ENCODE measurements at regions of chr2 and their contacts with region 1.

Region 1: DNA sequence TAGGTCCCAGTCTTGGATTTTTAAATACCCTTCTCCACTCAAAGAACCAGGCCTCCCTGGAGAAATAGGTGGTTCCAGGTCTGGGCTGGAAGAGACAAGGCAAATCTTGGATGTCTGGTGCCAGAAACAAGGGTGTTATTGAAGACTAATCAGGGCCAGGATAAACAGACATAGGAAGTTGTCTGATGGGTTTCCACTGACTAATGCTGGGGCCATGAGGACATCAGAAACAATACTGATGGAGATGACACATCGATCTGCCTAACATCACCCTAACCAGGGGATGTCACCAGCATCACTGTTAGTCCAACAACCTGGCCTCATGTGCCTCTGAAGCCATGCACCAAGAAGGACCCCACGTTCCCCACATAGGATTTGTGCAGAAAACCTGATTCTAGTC is 42.5 kb upstream of the GLI2 start:
- DNase-seq: no peak
- H3K4me3 ChIP-seq: no peak overlapping the region
- CTCF ChIP-seq: no peak

Region 2: DNA sequence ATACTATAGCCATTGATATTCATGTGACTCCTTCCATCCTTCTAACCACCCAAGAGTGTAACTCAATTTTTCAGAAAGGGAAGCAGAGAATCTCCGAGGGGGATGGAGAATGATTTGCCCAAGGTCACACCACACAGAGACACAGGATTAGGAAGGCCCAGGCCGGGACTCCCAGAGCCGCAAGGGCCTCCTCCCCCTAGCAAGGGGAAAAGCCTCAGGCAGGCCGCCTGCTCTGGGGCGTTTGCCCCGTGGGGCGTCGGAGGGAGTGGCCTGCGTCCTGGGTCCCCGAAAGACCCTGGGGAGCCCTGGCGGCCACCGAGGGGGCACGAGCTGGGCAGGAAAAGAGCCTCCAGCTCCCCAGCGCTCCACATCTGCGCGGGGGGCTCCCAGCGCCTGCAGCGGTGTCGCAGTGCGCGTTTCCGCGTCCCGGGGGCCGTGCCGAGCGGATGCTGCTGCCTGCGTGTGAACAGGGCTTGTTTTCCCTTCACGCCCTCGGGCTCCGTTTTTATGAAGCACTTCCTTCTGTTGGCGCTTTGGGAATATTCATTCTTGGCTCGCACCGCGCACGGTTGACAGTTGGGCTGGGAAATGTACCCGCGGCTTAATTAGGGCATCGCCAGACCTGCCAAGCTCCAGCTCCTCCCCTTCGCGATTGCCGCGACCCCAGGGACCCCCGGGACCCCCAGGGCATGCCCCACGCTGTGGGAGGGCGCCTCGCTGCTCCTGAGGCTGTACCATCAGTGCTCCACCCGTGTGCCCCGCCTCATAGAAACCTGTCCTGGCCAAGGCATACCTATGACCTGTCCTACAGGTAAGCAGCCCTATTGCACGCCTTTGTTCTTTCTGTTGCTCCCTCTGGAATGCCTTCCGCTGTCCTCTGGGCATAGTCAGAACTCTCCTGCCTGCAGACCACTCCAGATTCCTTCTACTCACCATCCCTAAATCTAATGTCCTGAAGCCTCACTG is 116.3 kb before region 1 on chr2:
- CTCF ChIA-PET with region 1: no interaction called
- POLR2A ChIA-PET with region 1: no interaction called
- DNase-seq: no peak
- H3K4me3 ChIP-seq: peak overlapping the region; percentile 25
- CTCF ChIP-seq: no peak

Region 3: GRCh38 chr2:120735746-120736170 is 42.6 kb after region 1 on chr2 and contains the start of gene GLI2:
- CTCF ChIA-PET with region 1: interaction called, 11 read pairs
- POLR2A ChIA-PET with region 1: interaction called, 3 read pairs
- DNase-seq: no peak
- H3K4me3 ChIP-seq: peak within 1 kb of the TSS; percentile 88
- CTCF ChIP-seq: peak; percentile 84

Region 4: DNA sequence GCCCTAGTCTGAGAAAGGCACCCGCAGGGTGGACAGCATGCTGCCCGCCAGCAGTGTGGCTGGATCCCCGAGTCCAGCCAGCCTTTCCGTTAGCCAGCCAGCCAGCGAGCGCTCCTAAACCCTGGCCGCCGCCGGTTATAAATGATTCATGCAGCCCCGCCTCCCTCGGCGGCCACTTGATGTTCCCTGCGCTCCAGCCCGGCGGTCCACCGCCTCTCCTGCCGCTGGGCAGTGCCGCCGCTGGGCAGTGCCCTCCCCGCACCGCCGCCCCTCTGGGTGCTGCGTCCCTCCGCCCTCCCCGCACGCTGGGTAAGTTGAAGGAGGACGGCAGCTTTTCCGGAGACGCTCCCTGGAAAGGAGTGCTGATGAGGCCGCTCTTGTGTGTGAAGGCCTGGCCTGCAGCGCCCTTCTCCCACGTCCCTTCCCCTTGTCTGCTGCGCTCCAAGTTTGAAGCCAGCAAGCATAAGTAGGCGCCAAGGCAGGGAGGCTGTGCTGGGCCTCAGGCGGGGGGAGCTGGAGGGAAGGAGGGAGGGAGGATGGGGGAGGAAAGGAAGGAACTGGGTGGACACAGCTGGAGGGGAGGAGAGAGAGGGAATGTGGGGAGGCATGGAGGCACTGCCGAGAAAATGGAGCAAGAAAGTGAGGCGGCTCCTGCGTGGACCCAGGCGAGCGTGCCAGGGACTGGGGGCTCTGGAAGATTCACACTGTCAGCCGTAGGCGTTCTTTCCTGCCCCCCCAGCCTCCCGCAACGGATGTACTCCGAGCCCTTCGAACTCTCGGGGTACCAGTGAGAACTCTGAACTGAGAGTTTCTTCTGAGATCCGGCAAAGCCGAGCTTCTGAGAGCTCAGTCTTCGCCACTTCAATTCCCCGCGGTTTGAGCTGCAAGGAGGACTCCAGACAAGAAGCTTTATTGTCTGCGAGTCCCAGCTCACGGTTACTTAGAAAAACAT is 174.4 kb after region 1 on chr2:
- CTCF ChIA-PET with region 1: interaction called, 17 read pairs
- POLR2A ChIA-PET with region 1: no interaction called
- DNase-seq: no peak
- H3K4me3 ChIP-seq: peak overlapping the region; percentile 56
- CTCF ChIP-seq: no peak

Region 5: GRCh38 chr2:120934574-120935340 is 241.6 kb after region 1 on chr2:
- CTCF ChIA-PET with region 1: interaction called, 13 read pairs
- POLR2A ChIA-PET with region 1: no interaction called
- DNase-seq: peak; percentile 83
- H3K4me3 ChIP-seq: no peak overlapping the region
- CTCF ChIP-seq: no peak

Region 6: DNA sequence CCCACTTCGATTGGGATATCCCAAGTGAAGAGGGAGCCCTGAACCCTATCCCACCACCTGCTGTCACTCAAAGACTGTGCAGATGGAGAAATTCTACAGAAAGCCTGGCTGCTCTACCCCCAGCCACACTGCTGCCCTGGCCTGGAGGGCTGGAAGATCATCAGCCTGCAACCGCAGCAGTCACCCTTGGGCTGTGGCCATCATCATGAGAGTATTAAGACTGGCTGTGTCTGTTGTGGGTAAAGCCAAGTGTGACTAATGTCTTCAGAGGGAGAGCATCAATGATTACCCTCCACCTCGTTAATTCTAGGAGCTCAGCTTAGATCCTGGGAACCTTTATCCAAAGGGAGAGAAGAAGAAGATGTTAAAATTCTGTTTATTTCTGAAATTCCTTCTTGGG is 370.4 kb after region 1 on chr2:
- CTCF ChIA-PET with region 1: interaction called, 341 read pairs
- POLR2A ChIA-PET with region 1: no interaction called
- DNase-seq: no peak
- H3K4me3 ChIP-seq: no peak overlapping the region
- CTCF ChIP-seq: no peak

Measured in AG04449 (cell line).